ENCODE measurements at regions of chr12 and their contacts with region 1.

Region 1: GRCh38 chr12:32106517-32107358 is at the start of gene BICD1:
- DNase-seq: peak; percentile 75
- ATAC-seq: peak; percentile 82
- H3K4me3 ChIP-seq: peak within 1 kb of the TSS; percentile 93
- H3K27ac ChIP-seq: peak within 1 kb of the TSS; percentile 66
- H3K4me1 ChIP-seq: peaks cover 13% of the 10 kb centered on the region
- H3K27me3 ChIP-seq: no peaks in the 10 kb centered on the region
- CTCF ChIP-seq: peak; percentile 32; the same call in 1 of the 2 replicates
- total RNA-seq, gene BICD1: 9.2 and 15.7 TPM in 2 replicates

Region 2: DNA sequence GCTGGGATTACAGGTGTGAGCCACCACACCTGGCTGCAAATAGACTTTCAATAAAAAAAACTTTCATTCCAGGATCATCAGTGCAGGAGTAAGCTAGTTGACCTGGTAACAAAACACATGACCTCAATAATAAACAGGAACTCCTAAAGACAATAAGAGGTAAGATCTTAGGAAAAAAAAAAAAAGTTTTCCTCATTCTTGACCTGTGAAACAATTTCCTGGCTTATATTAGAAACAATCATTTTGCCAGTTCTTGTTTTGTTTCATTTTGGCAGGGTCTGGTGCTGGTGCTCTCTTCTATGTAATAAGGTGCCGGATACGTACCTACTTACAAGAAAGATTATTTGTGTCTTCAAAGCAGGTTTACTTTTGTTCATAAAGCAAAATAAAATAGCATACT is 287.3 kb before region 1 on chr12:
- CTCF ChIA-PET with region 1: no interaction called
- POLR2A ChIA-PET with region 1: no interaction called
- intact Hi-C with region 1: no loop called
- DNase-seq: no peak
- ATAC-seq: no peak
- H3K4me3 ChIP-seq: no peak overlapping the region
- H3K27ac ChIP-seq: no peak overlapping the region
- H3K4me1 ChIP-seq: no peaks in the 10 kb centered on the region
- H3K27me3 ChIP-seq: no peaks in the 10 kb centered on the region
- CTCF ChIP-seq: no peak

Region 3: GRCh38 chr12:32134189-32134888 is 27.6 kb after region 1 on chr12:
- CTCF ChIA-PET with region 1: interaction called, 4 read pairs
- POLR2A ChIA-PET with region 1: no interaction called
- intact Hi-C with region 1: loop called (anchors 2 kb)
- DNase-seq: peak; percentile 84
- ATAC-seq: peak; percentile 95
- H3K4me3 ChIP-seq: peak overlapping the region; percentile 32; the same call in 1 of the 2 replicates
- H3K27ac ChIP-seq: peak overlapping the region; percentile 39; the same call in 1 of the 2 replicates
- H3K4me1 ChIP-seq: peaks cover 8% of the 10 kb centered on the region
- H3K27me3 ChIP-seq: no peaks in the 10 kb centered on the region
- CTCF ChIP-seq: no peak

Region 4: GRCh38 chr12:32186814-32187515 is 80.2 kb after region 1 on chr12:
- CTCF ChIA-PET with region 1: no interaction called
- POLR2A ChIA-PET with region 1: no interaction called
- intact Hi-C with region 1: loop called (anchors 5 kb)
- DNase-seq: peak; percentile 81
- ATAC-seq: peak; percentile 88
- H3K4me3 ChIP-seq: no peak overlapping the region
- H3K27ac ChIP-seq: peak overlapping the region; percentile 86
- H3K4me1 ChIP-seq: peaks cover 36% of the 10 kb centered on the region
- H3K27me3 ChIP-seq: no peaks in the 10 kb centered on the region
- CTCF ChIP-seq: no peak

Region 5: GRCh38 chr12:32533971-32534590 is 427.3 kb after region 1 on chr12:
- CTCF ChIA-PET with region 1: no interaction called
- POLR2A ChIA-PET with region 1: no interaction called
- intact Hi-C with region 1: no loop called
- DNase-seq: peak; percentile 43
- ATAC-seq: peak; percentile 93
- H3K4me3 ChIP-seq: peak overlapping the region; percentile 60
- H3K27ac ChIP-seq: no peak overlapping the region
- H3K4me1 ChIP-seq: peaks cover 15% of the 10 kb centered on the region
- H3K27me3 ChIP-seq: no peaks in the 10 kb centered on the region
- CTCF ChIP-seq: no peak